AG04449 (cell line): ENCODE measurements at regions of chr1 and their contacts with region 1.

Region 1: DNA sequence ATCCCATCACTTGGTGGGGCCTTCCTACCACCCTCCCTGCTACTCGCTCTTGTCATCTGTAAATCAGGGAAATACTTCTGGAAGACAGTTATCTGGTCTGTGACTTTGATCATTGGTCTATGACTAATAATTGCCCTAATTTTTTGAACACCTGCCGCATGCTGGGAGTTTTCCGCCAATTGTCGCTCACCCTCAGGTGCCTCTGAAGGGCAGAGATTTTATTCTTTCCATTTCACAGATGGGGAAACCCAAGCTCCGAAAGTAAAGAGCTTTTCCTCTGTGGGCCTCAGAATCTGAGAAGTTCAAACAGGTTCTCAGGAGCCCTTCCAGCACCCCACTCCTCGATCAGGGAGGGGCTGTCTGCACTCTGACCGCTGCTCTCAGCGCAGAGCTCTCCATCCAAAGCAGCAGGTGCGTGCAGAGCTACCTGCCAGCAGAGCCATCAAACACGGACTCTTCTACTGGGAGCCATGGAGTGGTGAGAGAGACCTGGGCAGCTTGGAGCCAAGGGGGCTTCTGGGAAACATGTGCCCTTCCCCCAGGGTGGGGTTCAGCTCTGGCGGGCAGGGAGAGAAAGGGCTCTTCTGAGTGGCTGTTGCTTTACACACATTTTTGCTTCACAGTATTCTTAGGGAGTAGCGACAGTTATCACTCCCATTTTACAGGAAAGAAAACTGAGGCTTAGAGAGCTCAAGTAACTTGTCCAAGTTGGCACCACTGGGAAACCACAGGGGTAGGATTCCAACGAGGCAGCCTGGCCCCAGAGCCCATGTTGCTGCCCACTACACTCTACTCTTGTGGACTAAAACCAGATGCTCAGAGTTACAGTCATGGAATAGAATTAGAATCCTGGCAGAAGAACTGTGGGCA is 5.8 kb upstream of the RUNX3 start:
- DNase-seq: no peak
- H3K4me3 ChIP-seq: no peak overlapping the region
- CTCF ChIP-seq: no peak

Region 2: DNA sequence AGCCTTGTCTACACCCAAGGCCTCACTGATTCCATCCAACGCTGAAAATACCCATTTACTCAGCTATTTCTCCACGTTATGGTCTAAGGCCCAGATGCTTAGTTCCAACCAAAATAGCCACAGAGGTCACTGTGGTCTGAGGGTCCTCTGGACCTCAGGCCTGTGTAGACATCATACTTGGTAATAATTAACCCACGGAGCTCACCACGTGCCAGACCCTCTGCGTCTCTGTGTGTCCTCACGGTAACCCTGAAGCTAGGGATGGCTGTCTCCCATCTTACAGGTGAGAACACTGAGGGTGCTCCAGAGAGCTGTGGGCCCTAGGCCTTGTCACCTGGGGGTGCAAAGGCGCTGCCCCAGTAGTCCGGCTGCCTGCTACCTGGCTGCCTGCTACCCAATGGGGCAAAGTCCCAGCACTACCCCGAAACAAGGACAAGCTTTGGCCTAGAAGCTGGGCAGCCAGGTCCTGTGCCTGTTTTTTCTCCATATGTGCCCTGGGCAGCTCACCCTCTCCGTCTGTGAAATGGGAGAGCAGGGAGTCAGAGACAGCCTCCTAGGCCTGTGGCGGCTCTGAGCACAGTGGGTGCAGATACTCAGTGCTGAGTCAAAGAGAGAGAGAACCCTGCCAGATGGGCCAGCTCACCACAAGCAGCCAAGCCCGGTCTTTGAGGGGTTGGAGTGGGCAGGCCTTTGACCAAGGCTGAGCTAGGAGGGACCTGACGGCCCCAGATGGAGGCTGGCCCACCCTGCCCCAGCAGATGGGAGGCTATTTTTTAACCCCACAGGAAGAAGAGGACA is 11.2 kb after region 1 on chr1:
- CTCF ChIA-PET with region 1: interaction called, 45 read pairs
- POLR2A ChIA-PET with region 1: no interaction called
- DNase-seq: no peak
- H3K4me3 ChIP-seq: no peak overlapping the region
- CTCF ChIP-seq: no peak